Activated B cell treated with CpG ODN at 0.5 μM for 24 hours (primary cell): ENCODE measurements at regions of chr7 and their contacts with region 1.

Region 1: DNA sequence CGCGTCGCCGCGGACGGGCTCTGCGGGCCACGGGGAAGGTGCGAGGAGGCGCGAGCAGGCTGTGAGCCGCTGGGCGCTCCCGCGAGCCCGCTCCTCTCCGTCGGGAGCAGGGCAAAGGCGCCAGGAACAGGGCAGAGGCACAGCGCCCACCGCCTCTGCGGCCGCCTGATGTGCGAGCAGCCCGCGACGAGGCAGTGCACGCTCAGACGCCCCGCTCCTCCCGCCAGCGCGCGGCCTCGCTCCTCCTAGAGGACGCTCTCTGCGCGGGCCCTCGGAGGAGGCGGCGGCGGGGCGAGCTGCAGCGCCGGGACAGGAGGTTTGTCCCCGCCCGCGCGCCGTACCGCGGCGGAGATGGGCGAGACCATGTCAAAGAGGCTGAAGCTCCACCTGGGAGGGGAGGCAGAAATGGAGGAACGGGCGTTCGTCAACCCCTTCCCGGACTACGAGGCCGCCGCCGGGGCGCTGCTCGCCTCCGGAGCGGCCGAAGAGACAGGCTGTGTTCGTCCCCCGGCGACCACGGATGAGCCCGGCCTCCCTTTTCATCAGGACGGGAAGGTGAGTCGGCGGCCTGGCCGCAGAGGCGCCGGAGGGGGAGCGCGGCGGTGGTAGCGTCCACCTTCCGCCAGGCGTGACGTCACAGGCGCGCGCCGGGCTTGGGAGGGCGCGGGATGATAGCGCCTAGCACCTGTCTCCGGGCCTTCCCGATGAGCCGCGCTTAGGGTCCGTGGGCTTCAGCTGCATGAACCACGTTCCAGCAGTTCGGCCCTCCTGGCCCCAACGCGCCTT is 731 bp downstream of the LANCL2 start:
- DNase-seq: peak; percentile 99
- ATAC-seq: peak; percentile 86
- H3K4me3 Mint-ChIP-seq: peak overlapping the region; percentile 94
- H3K27ac Mint-ChIP-seq: peak overlapping the region; percentile 96
- H3K4me1 Mint-ChIP-seq: peaks cover 24% of the 10 kb centered on the region
- H3K27me3 Mint-ChIP-seq: no peaks in the 10 kb centered on the region
- CTCF ChIP-seq: no peak

Region 2: GRCh38 chr7:54758702-54759592 is 606.9 kb before region 1 on chr7 and contains the start of gene SEC61G:
- CTCF ChIA-PET with region 1: no interaction called
- POLR2A ChIA-PET with region 1: interaction called, 34 read pairs
- intact Hi-C with region 1: loop called (anchors 1 kb)
- DNase-seq: peak; percentile 89
- ATAC-seq: peak; percentile 95
- H3K4me3 Mint-ChIP-seq: peak within 1 kb of the TSS; percentile 98
- H3K27ac Mint-ChIP-seq: peak within 1 kb of the TSS; percentile 92
- H3K4me1 Mint-ChIP-seq: peaks cover 21% of the 10 kb centered on the region
- H3K27me3 Mint-ChIP-seq: no peaks in the 10 kb centered on the region
- CTCF ChIP-seq: no peak
- total RNA-seq, gene SEC61G: 57.3 and 65.8 TPM in 2 replicates

Region 3: GRCh38 chr7:55280031-55280454 is 85.8 kb before region 1 on chr7:
- CTCF ChIA-PET with region 1: interaction called, 3 read pairs
- POLR2A ChIA-PET with region 1: no interaction called
- intact Hi-C with region 1: loop called (anchors 5 kb)
- DNase-seq: no peak
- ATAC-seq: peak; percentile 69
- H3K4me3 Mint-ChIP-seq: no peak overlapping the region
- H3K27ac Mint-ChIP-seq: no peak overlapping the region
- H3K4me1 Mint-ChIP-seq: no peaks in the 10 kb centered on the region
- H3K27me3 Mint-ChIP-seq: no peaks in the 10 kb centered on the region
- CTCF ChIP-seq: no peak

Region 4: DNA sequence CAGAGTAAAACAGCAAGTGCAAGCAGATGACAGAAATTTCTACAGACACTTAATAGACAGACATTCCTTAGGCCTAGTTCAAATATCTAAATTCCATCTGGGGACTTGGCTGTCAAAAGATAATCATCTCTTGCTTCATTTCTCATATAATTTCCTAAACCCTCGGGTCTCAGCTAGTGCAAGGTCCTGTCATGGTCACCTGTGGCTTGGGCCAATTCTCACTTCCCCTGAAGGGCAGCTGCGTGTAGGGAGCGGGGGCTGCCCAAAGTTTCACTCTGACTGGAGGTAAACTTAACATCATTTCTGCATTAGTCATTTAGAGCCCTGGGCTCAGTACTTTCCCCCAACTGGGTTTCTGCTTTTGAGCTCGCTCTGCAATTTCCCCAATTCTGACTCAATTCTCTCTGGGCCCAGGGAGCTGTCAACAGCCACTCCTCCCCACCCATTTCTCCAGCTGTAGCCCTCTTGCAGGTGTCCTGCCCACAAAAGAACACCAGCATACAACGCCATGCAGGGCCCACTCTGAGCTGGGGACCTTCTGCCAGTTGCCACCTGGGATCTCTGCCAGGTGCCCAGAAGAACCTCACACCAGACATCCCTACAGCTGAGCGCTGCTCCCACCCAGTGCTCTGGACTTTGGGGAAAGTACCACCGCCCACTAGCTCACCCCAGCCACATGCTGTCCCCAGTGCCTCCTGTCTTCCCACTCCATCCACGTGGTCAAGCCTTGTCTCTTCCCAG is 168.5 kb after region 1 on chr7:
- CTCF ChIA-PET with region 1: no interaction called
- POLR2A ChIA-PET with region 1: interaction called, 28 read pairs
- intact Hi-C with region 1: loop called (anchors 1 kb)
- DNase-seq: peak; percentile 73
- ATAC-seq: peak; percentile 71
- H3K4me3 Mint-ChIP-seq: peak overlapping the region; percentile 85
- H3K27ac Mint-ChIP-seq: peak overlapping the region; percentile 98
- H3K4me1 Mint-ChIP-seq: peaks cover 99% of the 10 kb centered on the region
- H3K27me3 Mint-ChIP-seq: no peaks in the 10 kb centered on the region
- CTCF ChIP-seq: no peak

Region 5: GRCh38 chr7:55951637-55952351 is 585.9 kb after region 1 on chr7 and contains the start of gene MRPS17:
- CTCF ChIA-PET with region 1: no interaction called
- POLR2A ChIA-PET with region 1: no interaction called
- intact Hi-C with region 1: loop called (anchors 1 kb)
- DNase-seq: peak; percentile 84
- ATAC-seq: peak; percentile 100
- H3K4me3 Mint-ChIP-seq: peak within 1 kb of the TSS; percentile 98
- H3K27ac Mint-ChIP-seq: peak within 1 kb of the TSS; percentile 94
- H3K4me1 Mint-ChIP-seq: peaks cover 18% of the 10 kb centered on the region
- H3K27me3 Mint-ChIP-seq: peaks cover 2% of the 10 kb centered on the region
- CTCF ChIP-seq: no peak
- total RNA-seq, gene MRPS17: 16.9 and 20.6 TPM in 2 replicates

Region 6: DNA sequence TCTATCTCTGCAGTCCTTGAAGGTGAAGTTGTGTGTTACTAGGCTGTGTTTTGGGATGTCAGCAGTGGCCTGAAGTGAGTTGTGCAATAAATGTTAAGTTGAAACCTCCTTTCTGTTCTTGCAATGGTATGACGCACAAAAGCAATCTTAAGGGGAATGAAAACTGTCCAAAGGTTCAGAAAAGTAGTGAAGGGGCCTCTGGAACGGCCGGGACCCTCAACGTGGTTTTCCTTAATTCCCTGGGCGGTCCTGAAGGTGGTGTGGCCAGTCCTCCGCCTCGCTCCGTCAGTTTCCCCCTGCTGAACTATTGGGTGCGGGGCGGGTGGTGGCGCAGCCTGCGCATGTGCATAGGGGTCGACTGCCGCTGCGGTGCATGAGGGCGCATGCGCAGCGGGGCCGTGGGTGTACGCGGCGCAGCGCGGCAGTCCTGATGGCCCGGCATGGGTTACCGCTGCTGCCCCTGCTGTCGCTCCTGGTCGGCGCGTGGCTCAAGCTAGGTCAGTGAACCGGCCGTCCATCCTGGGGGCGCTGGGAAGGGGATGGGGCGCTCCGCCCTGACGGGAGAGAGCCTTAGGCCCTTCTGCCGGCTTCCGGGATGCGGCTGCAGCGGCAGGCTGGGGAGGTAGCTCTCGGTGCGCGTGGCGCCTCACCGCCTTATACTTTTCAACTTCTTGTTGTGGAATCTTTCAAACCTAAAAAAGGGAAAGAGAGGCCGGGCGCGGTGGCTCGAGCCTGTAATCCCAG is 698.2 kb after region 1 on chr7 and contains the start of gene SUMF2:
- CTCF ChIA-PET with region 1: no interaction called
- POLR2A ChIA-PET with region 1: interaction called, 12 read pairs
- intact Hi-C with region 1: no loop called
- DNase-seq: peak; percentile 91
- ATAC-seq: peak; percentile 92
- H3K4me3 Mint-ChIP-seq: peak within 1 kb of the TSS; percentile 92
- H3K27ac Mint-ChIP-seq: peak within 1 kb of the TSS; percentile 85
- H3K4me1 Mint-ChIP-seq: peaks cover 32% of the 10 kb centered on the region
- H3K27me3 Mint-ChIP-seq: no peaks in the 10 kb centered on the region
- CTCF ChIP-seq: no peak
- total RNA-seq, gene SUMF2: 91.1 and 103 TPM in 2 replicates